Activated CD4-positive, alpha-beta T cell treated with anti-CD3 and anti-CD28 coated beads, Interleukin-2, amount 10 ng/mL, durations not matched to agents 24 days and 14 days (primary cell): ENCODE measurements at regions of chr2 and their contacts with region 1.

Region 1: DNA sequence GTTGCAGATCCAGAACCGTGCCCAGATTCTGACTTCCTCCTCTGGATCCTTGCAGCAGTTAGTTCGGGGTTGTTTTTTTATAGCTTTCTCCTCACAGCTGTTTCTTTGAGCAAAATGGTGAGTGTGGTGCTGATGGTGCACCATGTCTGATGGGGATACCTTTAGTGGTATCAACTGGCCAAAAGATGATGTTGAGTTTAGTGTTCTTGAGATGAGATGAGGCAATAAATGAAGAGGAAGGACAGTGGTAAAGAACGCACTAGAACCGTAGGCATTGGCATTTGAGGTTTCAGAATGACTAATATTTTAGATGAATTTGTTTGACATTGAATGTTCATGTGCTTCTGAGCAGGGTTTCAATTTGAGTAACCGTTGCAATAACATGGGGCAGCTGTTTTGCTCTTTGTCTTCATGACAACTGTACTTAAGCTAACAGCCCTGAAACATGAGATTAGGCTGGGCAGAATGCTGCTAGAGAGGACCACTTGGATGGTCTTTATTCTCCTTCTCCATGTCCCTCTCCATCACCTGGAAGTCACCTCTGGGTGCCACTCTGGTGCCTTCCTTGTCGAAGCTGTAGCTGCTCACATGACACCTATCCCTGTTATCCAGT is 3.9 kb downstream of the CTLA4 start:
- DNase-seq: peak; percentile 88
- H3K4me3 Mint-ChIP-seq: peak overlapping the region; percentile 90
- H3K27ac Mint-ChIP-seq: peak overlapping the region; percentile 100
- H3K4me1 Mint-ChIP-seq: peaks cover 60% of the 10 kb centered on the region
- H3K27me3 Mint-ChIP-seq: no peaks in the 10 kb centered on the region

Region 2: DNA sequence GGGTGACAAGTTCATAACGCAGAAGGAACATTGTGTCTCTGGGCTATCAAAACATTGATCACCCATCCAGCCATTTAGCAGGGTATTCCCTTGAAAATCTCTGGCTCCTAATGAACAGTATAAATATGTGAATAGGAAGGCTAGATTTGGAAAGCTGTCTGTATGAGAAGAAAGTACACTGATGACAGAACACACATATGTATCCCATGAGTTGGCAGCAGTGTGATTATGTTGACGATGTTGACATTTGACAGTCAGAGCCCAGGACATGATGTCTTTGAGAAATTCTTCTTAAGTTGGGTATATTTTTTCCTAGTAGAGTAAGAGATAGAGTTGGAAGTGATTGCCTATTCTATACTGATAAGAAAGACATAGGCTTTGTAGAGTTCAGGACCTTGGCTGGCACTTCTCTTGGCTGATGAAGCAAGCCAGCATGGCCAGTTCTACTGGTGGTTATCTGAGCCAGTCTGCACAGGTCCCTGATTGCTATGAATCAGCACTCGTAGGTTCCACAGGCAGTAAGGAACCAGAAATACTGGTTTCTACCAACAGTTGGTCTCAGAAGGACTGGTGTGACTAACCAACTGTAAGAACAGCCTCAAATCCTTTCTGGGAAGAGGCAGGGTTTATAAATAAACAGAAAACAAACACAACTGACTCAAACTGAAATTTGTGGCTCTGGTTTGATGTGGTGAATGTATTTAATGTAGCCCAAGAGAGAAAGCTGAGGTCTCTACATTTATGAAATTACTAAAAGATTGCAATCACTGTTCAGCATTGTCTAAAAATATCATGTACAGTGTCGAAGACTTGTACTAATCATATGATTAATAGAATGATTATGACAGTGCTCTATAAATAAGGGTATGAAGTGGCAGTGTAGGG is 292.5 kb before region 1 on chr2:
- intact Hi-C with region 1: loop called (anchors 2 kb)
- DNase-seq: peak; percentile 87
- H3K4me3 Mint-ChIP-seq: peak overlapping the region; percentile 37
- H3K27ac Mint-ChIP-seq: peak overlapping the region; percentile 59
- H3K4me1 Mint-ChIP-seq: peaks cover 28% of the 10 kb centered on the region
- H3K27me3 Mint-ChIP-seq: peaks cover 37% of the 10 kb centered on the region

Region 3: DNA sequence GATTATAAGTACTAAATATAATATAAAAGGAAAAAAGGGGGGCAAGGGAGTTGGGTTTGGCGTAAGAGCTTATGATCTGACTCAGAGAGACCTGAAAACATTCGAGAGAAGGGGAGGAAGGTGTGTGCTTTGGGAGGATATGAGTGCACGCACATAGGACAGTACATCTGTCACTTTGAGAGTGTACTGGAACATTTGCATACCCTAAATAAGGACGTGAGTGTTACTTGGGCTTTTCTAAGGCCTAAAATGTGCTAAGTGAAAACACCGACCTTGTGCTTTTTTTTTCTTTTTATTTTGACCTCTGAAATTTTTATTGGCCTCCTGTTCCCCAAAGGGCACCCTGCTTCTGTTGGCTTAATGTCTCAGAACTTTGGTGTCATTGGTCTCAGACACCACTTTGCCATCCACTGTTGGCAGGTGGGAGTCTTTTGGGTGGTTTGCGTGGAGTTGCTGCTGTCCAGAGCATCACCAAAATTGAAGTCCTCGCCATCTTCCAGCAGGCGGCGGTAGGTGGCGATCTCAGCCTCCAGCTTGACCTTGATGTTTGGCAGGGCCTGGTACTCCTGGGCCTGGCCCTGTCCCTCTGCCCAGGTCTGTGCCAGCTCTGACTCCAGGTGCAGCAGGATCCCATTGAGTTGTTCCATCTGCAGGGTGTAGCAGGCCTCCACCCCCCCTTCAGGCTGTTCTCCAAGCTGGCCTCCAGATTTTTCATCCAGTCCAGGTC is 107.4 kb before region 1 on chr2:
- intact Hi-C with region 1: loop called (anchors 1 kb)
- DNase-seq: peak; percentile 55
- H3K4me3 Mint-ChIP-seq: peak overlapping the region; percentile 19
- H3K27ac Mint-ChIP-seq: peak overlapping the region; percentile 89
- H3K4me1 Mint-ChIP-seq: peaks cover 62% of the 10 kb centered on the region
- H3K27me3 Mint-ChIP-seq: no peaks in the 10 kb centered on the region

Region 4: DNA sequence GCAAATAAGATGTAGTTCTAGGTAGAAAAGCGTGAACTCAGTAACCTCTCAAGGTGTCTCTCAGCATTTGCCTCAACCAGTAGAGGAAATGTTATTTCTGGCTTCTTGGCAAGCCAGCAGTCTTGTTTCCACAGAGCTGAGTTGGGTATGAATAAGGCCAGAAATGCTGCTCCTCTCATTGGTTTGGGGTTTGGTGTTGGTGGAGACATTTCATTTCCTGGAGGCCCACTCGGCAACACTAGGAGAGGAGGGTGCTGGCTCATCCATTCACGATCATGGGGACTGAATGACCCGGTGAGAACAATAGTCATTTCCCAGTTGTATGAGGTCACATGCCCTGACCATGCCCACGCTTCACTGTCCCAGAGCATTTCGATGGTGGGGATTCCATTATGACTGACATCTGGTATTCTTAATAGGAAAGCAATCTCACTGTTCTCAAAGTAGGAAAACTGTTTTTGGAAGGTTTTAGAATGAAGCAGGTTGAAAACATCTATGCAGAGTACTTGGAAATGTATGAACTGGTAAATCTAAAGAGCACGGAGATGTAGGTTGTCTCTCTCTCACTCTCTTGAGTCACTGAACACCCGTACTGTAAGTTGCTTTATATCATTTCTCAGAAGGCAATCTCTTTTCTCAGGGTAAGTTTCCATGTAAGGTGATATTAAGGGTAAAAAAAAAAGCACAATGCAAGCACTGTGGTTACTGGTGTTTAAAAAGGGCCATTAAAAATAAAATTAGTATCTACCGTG is 41.0 kb before region 1 on chr2:
- intact Hi-C with region 1: loop called (anchors 1 kb)
- DNase-seq: peak; percentile 81
- H3K4me3 Mint-ChIP-seq: peak overlapping the region; percentile 53
- H3K27ac Mint-ChIP-seq: peak overlapping the region; percentile 93
- H3K4me1 Mint-ChIP-seq: peaks cover 21% of the 10 kb centered on the region
- H3K27me3 Mint-ChIP-seq: no peaks in the 10 kb centered on the region

Region 5: DNA sequence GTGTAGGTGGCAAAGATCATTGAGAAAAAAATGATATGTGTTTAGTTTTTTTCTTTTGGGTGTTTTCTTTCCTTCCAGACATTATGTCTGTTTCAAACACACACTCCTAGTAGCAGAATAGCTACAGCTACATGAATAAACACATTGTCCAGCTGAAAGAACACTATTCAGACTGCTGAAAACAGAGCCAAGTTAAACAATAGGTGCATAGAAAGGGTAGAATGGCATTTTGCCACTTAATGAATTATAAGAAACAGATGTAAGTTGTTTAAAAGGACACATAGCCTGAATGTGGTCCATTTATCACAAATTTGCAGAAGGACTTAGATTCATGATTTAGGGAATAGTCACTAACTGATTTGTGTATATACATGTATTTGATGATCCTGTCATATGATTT is 16.2 kb after region 1 on chr2:
- intact Hi-C with region 1: loop called (anchors 1 kb)
- DNase-seq: no peak
- H3K4me3 Mint-ChIP-seq: no peak overlapping the region
- H3K27ac Mint-ChIP-seq: no peak overlapping the region
- H3K4me1 Mint-ChIP-seq: peaks cover 51% of the 10 kb centered on the region
- H3K27me3 Mint-ChIP-seq: no peaks in the 10 kb centered on the region

Region 6: DNA sequence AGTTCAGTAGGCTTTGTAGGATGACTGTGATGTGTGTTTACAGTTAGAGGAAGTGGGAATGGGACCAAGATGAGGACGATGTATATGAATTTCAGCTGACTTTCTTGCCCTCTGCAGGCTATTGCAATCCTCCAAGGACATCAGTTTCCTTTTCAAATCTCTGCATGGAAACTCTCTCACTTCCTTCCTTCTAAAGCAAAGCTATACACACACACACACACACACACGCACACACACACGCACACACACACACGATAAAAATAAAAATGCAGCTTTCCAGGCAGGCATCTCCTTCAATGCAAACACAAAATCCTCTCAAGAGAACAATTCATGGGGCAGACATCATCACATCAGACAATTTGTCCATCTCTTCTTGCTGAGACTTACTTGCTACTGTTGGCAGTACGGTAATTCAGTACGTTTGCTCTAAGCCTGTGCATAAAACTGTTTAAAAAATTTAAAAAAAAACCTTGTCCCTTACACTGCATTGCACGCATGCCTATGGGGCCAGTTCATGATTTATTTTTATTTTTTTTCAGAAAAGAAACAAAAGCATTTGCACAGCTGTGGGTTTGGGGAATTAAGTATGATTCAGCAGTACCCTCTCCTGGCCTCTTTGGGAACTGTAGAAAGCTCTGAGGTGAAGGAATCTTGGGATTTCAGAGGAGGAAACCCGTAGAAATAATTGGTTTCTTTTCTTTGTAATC is 37.9 kb after region 1 on chr2:
- intact Hi-C with region 1: loop called (anchors 1 kb)
- DNase-seq: peak; percentile 83
- H3K4me3 Mint-ChIP-seq: peak overlapping the region; percentile 63
- H3K27ac Mint-ChIP-seq: peak overlapping the region; percentile 76
- H3K4me1 Mint-ChIP-seq: peaks cover 19% of the 10 kb centered on the region
- H3K27me3 Mint-ChIP-seq: peaks cover 7% of the 10 kb centered on the region